Ascending aorta (tissue), 2 donors: ENCODE measurements at regions of chr3 and their contacts with region 1.

Region 1: DNA sequence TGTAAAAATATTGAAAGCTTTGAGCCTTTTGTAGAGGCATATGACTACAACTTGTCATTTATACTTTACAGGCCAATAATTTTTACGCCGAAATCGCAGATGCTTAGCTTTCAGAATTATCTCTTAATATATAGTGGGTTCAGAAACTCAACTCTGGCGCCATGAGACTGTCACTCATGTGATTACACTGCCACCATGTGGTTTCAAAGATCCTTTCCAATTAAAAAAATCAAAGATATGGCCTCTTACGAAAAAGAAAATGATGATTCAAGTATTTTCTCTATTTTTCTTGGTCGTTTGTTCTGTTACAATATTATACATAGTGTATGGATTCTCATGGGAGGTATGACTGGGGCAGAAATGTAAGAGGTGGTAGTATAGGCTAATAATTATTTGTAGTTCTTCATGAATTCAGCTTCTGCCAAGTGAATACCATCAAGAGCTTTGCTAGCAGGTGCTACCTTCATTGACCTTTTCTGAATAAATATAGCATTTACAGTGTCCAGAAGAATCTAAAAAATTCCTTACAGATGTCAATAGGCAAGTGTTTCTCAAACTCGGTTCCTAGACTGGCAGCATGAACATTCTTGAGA is 751.7 kb upstream of the GOLIM4 start:
- DNase-seq: no peak
- H3K4me3 ChIP-seq: no peak overlapping the region
- H3K27ac ChIP-seq: no peak overlapping the region
- H3K4me1 ChIP-seq: no peaks in the 10 kb centered on the region
- H3K27me3 ChIP-seq: no peaks in the 10 kb centered on the region
- CTCF ChIP-seq: peak in 2 of 3 experiments; percentile 34 to 54

Region 2: GRCh38 chr3:168134931-168135330 is 712.5 kb before region 1 on chr3:
- intact Hi-C with region 1: no loop called
- DNase-seq: no peak
- H3K4me3 ChIP-seq: no peak overlapping the region
- H3K27ac ChIP-seq: no peak overlapping the region
- H3K4me1 ChIP-seq: no peaks in the 10 kb centered on the region
- H3K27me3 ChIP-seq: no peaks in the 10 kb centered on the region
- CTCF ChIP-seq: no peak

Region 3: DNA sequence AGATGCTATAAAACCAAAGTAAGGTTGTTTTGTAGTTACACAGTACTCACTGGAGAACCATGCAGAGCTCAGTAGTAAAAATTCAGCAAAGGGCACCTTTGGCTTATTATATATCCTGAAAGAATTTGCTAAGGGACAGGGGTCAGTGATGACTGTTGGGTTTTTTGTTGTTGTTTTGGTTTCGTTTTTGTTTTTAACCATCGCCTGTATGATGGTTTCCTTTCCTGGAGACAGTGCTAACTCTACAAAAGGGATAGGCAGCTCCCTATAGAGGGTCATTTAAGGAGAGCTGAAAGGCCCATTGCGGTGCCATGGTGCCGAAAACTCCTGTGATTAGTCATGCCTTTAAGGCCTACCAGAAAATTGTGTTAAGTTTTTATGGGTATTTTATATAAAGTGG is 633.5 kb before region 1 on chr3:
- intact Hi-C with region 1: loop called (anchors 2 kb)
- DNase-seq: no peak
- H3K4me3 ChIP-seq: no peak overlapping the region
- H3K27ac ChIP-seq: no peak overlapping the region
- H3K4me1 ChIP-seq: no peaks in the 10 kb centered on the region
- H3K27me3 ChIP-seq: no peaks in the 10 kb centered on the region
- CTCF ChIP-seq: no peak

Region 4: DNA sequence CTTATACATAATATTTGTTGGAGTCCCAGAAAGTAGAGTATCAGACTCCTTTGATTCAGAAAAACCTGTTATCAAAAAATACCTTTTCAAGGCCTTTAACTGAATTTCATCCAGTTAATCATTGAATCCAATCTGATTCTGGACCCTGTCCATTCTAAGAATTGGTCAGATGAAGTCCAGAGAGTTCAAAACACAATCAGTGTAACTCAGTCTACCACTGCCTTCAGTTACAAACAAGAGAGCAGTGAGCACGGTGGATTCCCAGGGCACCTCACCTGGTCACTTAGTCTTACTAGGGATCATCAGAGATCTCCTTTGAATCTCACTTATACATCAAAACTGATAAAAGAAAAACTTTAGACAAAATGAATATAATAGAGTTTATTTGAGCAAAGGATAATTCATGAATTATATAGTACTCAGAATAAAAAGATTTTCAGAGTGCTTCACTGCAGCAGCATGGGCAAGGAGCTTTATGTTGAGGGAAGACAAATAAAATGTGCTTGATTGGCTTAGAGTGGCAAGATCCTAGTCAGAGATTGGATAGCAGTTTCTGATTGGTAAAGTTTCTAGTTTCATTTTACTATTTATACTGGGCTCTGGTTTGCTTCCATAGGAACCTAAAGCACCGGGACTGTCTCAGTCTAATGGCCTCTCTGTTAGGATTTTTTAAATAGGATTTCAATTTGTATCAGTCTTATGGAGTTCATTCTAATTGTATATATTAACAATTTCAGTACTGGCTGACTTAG is 276.8 kb before region 1 on chr3:
- intact Hi-C with region 1: no loop called
- DNase-seq: no peak
- H3K4me3 ChIP-seq: no peak overlapping the region
- H3K27ac ChIP-seq: no peak overlapping the region
- H3K4me1 ChIP-seq: no peaks in the 10 kb centered on the region
- H3K27me3 ChIP-seq: no peaks in the 10 kb centered on the region
- CTCF ChIP-seq: no peak